ENCODE measurements at regions of chr5 and their contacts with region 1.

Region 1: GRCh38 chr5:134904630-134905245 is at the start of gene PCBD2:
- DNase-seq: peak; percentile 89 to 94
- H3K4me3 ChIP-seq: peak within 1 kb of the TSS; percentile 71 to 80
- H3K27ac ChIP-seq: peak within 1 kb of the TSS; percentile 92 to 94
- H3K4me1 ChIP-seq: peaks cover 0 to 6% (median 0%) of the 10 kb centered on the region in 4 donors
- H3K27me3 ChIP-seq: no peaks in the 10 kb centered on the region
- CTCF ChIP-seq: peak; percentile 84 to 94

Region 2: DNA sequence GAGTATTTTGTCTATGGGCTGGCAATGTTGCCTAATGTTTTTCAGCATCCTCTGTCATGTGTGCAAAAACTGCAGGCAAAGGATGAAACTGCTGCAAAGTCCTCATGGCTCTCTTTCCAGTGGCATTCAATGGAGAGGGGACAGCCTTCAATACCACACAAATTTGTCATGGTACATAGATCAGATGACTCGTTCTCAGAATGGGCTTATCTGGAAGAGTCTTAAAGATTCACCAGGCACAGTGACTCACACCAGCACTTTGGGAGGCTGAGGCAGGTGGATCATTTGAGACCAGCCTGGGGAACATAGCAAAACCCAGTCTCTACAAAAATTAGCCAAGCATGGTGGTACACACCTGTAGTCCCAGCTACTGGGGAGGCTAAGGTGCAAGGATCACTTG is 498.3 kb before region 1 on chr5:
- intact Hi-C with region 1: loop called (anchors 10 kb)
- DNase-seq: no peak
- H3K4me3 ChIP-seq: no peak overlapping the region
- H3K27ac ChIP-seq: no peak overlapping the region
- H3K4me1 ChIP-seq: peaks cover 0 to 14% (median 13%) of the 10 kb centered on the region in 4 donors
- H3K27me3 ChIP-seq: no peaks in the 10 kb centered on the region
- CTCF ChIP-seq: no peak

Region 3: DNA sequence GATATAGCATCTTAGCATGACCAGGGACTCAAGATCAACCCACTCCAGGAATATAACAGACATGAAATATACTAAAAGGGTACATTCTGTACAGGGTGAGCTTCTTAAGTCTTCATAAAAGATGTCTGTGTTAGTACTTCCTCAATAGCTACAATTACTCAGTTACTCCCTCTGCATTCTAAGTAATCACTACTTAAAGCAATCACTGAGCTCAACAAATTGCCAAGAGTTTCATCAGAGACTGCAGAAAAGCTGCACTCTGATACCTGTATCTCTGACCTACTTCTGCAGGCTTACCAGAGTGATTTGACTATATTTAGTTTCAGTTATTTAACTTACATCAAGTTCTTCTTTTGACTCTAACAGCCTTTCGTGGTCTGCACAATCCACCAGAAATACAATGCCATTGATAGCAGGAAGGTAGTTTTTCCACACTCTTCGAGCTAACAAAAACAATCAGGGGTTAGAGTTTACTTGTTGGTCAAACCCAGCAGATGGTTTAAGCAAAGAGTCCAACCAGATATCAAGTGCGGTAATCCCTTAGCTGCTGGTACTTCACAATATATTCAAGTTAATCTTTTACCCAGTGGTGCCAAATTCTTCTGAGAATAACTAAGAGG is 295.4 kb before region 1 on chr5:
- intact Hi-C with region 1: no loop called
- DNase-seq: no peak
- H3K4me3 ChIP-seq: no peak overlapping the region
- H3K27ac ChIP-seq: no peak overlapping the region
- H3K4me1 ChIP-seq: no peaks in the 10 kb centered on the region
- H3K27me3 ChIP-seq: no peaks in the 10 kb centered on the region
- CTCF ChIP-seq: no peak

Region 4: DNA sequence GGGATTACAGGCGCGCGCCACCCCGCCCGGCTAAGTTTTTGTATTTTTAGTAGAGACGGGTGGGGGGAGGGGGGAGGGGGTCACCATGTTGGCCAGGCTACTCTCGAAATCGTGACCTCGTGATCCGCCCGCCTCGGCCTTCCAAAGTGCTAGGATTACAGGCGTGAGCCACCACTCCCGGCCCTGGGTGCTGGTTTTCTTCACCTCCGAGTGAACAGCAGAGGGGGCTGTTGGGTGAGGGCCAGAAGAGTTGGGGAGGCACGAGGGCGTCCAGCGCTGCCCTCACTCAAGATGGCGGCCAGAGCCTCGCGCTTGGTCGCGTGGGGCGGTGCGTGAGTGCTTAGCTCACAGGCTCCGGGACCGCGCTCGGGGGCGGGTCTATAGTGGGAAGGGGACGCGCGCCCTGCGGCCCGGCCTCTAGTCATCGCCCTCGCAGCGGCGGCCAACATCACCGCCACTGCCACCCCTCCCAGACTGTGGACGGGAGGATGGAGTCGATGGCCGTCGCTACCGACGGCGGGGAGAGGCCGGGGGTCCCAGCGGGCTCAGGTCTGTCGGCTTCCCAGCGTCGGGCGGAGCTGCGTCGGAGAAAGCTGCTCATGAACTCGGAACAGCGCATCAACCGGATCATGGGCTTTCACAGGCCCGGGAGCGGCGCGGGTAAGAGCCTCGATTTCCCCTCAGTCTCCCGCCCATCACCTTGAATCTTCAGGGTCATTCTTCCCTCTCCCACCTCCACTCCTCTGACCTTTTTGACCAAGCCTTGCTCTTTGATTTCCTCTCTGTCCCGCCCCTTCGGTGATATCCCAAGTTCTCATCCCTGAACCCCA is 166.4 kb before region 1 on chr5 and contains the start of gene CAMLG:
- intact Hi-C with region 1: loop called (anchors 10 kb)
- DNase-seq: peak; percentile 98 to 99
- H3K4me3 ChIP-seq: peak within 1 kb of the TSS; percentile 58 to 69
- H3K27ac ChIP-seq: peak within 1 kb of the TSS; percentile 90 to 94
- H3K4me1 ChIP-seq: peaks cover 0 to 25% (median 18%) of the 10 kb centered on the region in 4 donors
- H3K27me3 ChIP-seq: no peaks in the 10 kb centered on the region
- CTCF ChIP-seq: peak; percentile 39 to 49

Region 5: DNA sequence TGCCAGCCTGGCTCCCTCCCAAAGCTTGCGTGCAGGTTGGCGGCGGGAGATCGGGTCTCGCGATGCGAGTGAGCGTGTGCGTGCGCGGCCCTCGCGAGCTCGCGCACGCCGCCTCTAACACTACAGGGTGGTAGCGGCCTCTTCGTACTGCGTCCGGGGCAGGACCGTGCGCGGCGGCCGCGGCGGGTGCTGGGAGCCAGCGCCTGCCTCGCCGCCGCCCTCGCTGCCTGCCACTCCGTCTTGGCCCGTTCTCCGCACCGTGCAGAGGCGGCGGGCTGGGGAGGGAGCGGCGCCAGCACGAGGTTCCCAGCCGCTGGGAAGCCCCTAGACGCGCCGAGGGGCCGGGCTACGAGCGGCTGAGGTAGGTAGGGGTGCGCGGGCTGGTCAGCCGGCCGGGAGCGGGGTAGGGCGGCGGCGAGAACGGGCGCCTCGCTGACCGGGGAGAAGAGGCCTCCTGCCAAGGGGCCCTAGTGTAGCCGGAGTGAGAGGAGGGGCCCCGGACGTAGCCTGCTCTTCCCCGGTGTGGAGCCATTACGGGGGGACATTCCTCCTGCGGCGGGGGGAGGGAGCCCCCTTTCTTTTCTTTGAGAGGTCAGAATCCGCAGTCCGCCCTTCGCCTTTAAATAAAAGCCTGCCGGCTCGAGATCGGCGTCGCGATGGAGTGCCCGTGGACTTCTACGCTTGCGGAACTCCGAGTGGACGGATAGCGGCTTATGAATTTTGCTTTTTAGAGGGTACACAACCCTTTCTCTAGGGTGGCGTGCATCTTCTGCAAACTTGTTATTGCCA is 58.7 kb before region 1 on chr5 and contains the start of gene C5orf24:
- intact Hi-C with region 1: loop called (anchors 5 kb)
- DNase-seq: peak; percentile 93 to 97
- H3K4me3 ChIP-seq: peak within 1 kb of the TSS; percentile 73 to 83
- H3K27ac ChIP-seq: peak within 1 kb of the TSS; percentile 95 to 96
- H3K4me1 ChIP-seq: peaks cover 0 to 47% (median 34%) of the 10 kb centered on the region in 4 donors
- H3K27me3 ChIP-seq: no peaks in the 10 kb centered on the region
- CTCF ChIP-seq: no peak

Region 6: DNA sequence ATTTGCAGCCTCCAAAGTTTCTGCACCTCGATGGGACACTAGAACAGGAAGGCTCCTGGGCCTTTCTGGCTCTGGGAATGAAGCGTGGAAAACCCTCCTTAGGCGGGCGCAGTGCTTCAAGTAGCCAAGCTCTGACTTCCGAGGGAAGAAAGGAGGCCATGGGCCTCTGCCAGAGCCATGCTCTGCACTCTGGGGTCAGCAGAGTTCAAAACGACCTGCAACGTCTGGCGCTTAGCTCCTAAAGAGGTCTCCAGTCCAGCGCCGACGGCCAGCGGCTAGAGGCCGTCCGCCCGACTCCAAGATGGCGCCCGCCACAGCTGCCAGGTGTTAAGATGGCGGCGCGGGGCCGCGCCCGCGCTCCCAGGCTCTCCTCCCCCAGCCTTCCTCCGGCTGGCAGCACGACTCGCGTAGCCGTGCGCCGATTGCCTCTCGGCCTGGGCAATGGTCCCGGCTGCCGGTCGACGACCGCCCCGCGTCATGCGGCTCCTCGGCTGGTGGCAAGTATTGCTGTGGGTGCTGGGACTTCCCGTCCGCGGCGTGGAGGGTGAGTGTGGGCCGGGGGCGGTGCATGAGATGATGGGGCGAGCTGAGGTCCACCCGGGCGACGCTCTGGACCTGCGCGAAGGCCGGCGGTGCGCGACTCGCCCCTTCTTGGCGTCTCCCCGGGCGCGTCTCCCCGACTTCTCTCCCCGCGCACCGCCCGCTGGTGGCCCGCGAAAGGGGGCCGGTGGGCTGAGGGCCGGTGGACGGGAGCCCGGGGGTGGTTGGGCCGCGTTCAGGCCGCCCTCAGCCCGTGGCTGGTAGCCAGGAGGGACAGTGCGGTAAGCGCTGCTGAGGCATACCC is 30.5 kb before region 1 on chr5 and contains the start of gene TXNDC15:
- intact Hi-C with region 1: loop called (anchors 2 kb)
- DNase-seq: peak; percentile 86 to 92
- H3K4me3 ChIP-seq: peak within 1 kb of the TSS; percentile 84 to 91
- H3K27ac ChIP-seq: peak within 1 kb of the TSS; percentile 96 to 97
- H3K4me1 ChIP-seq: peaks cover 0 to 21% (median 16%) of the 10 kb centered on the region in 4 donors
- H3K27me3 ChIP-seq: no peaks in the 10 kb centered on the region
- CTCF ChIP-seq: no peak

Region 7: DNA sequence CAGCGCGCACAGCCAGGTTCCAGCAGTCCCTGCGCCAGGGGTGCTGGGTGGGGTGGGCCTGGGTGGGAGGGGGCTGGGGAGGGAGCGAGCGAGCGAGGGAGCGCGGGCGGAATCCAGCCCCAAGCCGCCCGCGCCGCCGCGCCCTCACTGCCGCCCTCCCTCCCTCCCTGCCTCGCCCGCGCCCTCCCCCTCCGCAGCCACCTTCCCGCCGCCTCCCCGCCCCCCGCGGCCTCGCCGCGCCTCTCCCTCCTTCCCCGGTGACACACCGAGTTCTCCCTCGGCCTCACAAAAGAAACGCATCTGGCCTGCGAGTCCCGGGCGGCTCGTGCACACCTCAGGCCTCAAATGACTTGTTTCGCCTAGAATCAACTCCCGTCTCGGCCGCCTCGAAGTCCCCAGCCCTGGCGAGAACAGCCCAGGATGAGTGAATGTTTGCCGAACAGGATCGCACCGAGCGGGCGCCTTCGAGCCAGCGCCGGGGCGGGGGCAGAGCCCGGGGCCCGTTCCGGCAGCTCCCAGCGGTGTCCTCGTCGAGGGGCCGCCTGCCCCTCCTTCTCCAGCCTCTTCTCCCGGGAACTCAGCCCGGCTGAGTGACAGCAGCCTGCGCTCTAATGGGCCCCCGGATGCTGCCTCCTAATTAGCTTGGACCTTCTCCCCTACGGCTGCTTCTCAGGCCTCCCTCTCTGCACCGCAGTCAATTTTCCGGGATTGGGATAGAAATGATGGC is 129.7 kb after region 1 on chr5:
- intact Hi-C with region 1: loop called (anchors 10 kb)
- DNase-seq: peak; percentile 62 to 91
- H3K4me3 ChIP-seq: peak overlapping the region; percentile 90
- H3K27ac ChIP-seq: peak overlapping the region; percentile 84 to 96
- H3K4me1 ChIP-seq: peaks cover 0 to 48% (median 26%) of the 10 kb centered on the region in 4 donors
- H3K27me3 ChIP-seq: peaks cover 0 to 38% of the 10 kb centered on the region in 2 donors
- CTCF ChIP-seq: no peak

Measured in tibial artery (tissue), 4 donors.